GM12878 (cell line): ENCODE measurements at regions of chr1 and their contacts with region 1.

Region 1: GRCh38 chr1:233598891-233599541 is 14.9 kb upstream of the KCNK1 start:
- DNase-seq: peak; percentile 76
- ATAC-seq: peak; percentile 82
- H3K4me3 ChIP-seq: peak overlapping the region; percentile 33; the same call in 1 of the 2 replicates
- H3K27ac ChIP-seq: peak overlapping the region; percentile 96
- H3K4me1 ChIP-seq: peaks cover 30% of the 10 kb centered on the region
- H3K27me3 ChIP-seq: no peaks in the 10 kb centered on the region
- CTCF ChIP-seq: no peak
- EP300 ChIP-seq: peak; percentile 94 to 98
- POLR2A ChIP-seq: no peak
- RAD21 ChIP-seq: no peak

Region 2: DNA sequence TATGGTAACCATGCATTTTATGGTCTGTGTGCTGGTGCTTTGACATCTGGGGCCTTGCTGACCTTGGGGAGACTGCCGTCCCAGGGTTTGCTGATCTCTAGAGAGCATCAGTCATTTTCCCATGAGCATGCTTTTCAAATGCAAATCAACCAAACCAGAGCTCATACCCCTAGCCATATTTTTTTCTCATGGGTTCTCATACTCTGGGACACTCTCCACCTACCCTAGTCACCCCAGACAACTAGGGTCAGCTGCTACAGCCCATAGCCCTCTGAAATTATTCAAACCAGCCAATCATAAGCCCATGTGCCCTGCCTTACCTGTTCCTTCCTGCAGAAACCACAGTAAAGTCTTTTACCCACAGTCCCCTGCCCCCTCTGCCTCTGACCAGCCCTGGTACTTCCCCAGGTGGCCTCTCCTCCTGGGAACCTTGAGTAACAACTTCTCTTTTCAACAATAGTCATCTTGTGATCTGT is 139.5 kb before region 1 on chr1:
- CTCF ChIA-PET with region 1: interaction called, 6 read pairs
- POLR2A ChIA-PET with region 1: no interaction called
- RAD21 ChIA-PET with region 1: interaction called, 19 read pairs
- SMC1A ChIA-PET with region 1: interaction called, 18 read pairs
- in situ Hi-C with region 1: no loop called
- intact Hi-C with region 1: loop called (anchors 1 kb)
- DNase-seq: peak; percentile 83
- ATAC-seq: peak; percentile 90
- H3K4me3 ChIP-seq: no peak overlapping the region
- H3K27ac ChIP-seq: no peak overlapping the region
- H3K4me1 ChIP-seq: peaks cover 8% of the 10 kb centered on the region
- H3K27me3 ChIP-seq: no peaks in the 10 kb centered on the region
- CTCF ChIP-seq: no peak
- EP300 ChIP-seq: peak; percentile 59 to 60; a peak in 3 of 4 replicates
- POLR2A ChIP-seq: no peak
- RAD21 ChIP-seq: no peak

Region 3: DNA sequence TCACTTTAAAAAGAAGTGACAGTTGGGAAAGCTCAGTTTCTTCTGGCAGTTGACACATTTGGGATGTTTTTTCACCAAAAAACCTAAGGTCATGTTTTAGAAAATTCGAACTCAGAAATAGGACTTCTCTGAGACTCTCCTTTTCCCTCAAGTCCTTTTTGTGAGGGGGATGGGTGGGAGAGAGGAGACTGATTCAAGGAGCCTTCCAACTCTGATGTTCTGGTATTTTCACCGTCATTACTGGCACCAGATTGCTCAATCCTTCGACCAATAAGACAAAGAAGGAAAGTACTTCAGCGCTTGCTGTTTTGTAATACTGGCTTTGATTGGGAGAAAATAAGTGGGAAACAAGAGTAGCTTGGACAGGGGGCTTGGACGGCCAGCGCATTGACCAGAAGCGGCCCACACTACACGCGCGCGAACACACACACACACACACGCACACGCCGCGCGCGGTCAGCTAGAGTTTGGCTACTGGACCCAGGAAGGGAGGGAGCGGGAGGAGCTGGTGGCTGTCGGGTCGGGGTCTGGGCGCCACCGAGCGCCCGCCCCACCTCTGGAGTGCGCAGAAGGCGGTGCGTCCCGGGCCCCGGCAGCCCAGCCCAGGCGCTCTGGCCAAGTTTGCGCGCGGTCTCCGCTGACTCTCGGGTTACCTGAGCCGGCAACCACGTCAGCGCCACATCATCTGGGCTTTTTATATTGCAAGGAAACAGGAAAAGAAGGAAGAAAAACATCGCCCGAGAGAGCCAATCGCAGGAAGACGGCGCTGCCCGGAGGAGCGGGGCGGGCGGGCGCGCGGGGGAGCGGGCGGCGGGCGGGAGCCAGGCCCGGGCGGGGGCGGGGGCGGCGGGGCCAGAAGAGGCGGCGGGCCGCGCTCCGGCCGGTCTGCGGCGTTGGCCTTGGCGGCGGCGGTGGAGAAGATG is 14.5 kb after region 1 on chr1 and contains the start of gene KCNK1:
- CTCF ChIA-PET with region 1: interaction called, 6 read pairs
- POLR2A ChIA-PET with region 1: interaction called, 27 read pairs
- RAD21 ChIA-PET with region 1: interaction called, 31 read pairs
- SMC1A ChIA-PET with region 1: interaction called, 29 read pairs
- in situ Hi-C with region 1: no loop called
- intact Hi-C with region 1: loop called (anchors 1 kb)
- DNase-seq: no peak
- ATAC-seq: peak; percentile 51
- H3K4me3 ChIP-seq: peak within 1 kb of the TSS; percentile 81
- H3K27ac ChIP-seq: peak within 1 kb of the TSS; percentile 76
- H3K4me1 ChIP-seq: peaks cover 9% of the 10 kb centered on the region
- H3K27me3 ChIP-seq: no peaks in the 10 kb centered on the region
- CTCF ChIP-seq: no peak
- EP300 ChIP-seq: no peak
- POLR2A ChIP-seq: no peak
- RAD21 ChIP-seq: no peak
- polyA plus RNA-seq, gene KCNK1: 9.4 to 14.6 TPM

Region 4: GRCh38 chr1:233620065-233620464 is 21.0 kb after region 1 on chr1:
- CTCF ChIA-PET with region 1: interaction called, 5 read pairs
- POLR2A ChIA-PET with region 1: interaction called, 25 read pairs
- RAD21 ChIA-PET with region 1: interaction called, 28 read pairs
- SMC1A ChIA-PET with region 1: interaction called, 14 read pairs
- in situ Hi-C with region 1: no loop called
- intact Hi-C with region 1: no loop called
- DNase-seq: peak; percentile 49
- ATAC-seq: peak; percentile 59
- H3K4me3 ChIP-seq: no peak overlapping the region
- H3K27ac ChIP-seq: no peak overlapping the region
- H3K4me1 ChIP-seq: peaks cover 23% of the 10 kb centered on the region
- H3K27me3 ChIP-seq: no peaks in the 10 kb centered on the region
- CTCF ChIP-seq: no peak
- EP300 ChIP-seq: peak; percentile 58 to 86; a peak in 3 of 4 replicates
- POLR2A ChIP-seq: no peak
- RAD21 ChIP-seq: no peak

Region 5: DNA sequence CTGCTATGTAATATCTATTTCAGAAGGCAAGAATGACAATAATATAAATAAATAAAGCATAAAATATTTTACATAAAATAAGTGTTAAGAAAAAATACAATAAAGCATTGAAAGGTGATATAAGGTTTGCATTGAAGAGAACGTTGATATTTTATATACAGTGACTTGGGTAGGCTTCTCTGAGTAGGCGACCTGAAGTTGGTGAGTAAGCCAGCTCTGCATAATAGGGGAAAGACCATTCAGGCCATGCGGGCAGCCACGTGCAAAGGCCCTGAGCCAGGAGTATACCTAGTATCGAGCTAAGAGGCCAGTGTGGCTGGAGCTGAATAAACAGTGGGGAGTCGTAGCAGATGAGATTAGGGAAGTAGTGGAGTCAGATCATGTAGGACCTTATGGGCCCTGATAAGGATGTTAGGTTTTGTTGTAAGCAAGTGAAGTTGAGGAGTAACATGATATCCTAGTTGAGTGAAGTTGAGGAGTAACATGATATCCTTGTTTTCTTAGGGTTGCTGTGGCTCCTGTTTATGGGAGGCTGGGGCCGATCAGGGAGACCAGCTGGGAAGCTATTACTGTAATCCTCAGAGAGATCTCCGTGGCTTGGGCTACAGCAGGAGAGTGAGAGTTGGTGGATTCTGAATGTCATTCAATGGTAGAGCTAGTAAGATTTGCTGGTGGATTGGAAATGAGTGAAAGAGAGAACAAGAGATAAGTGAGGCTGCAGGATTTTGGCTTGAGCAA is 36.9 kb after region 1 on chr1:
- CTCF ChIA-PET with region 1: interaction called, 3 read pairs
- POLR2A ChIA-PET with region 1: interaction called, 3 read pairs
- RAD21 ChIA-PET with region 1: interaction called, 12 read pairs
- SMC1A ChIA-PET with region 1: interaction called, 7 read pairs
- in situ Hi-C with region 1: no loop called
- intact Hi-C with region 1: no loop called
- DNase-seq: no peak
- ATAC-seq: no peak
- H3K4me3 ChIP-seq: no peak overlapping the region
- H3K27ac ChIP-seq: no peak overlapping the region
- H3K4me1 ChIP-seq: peaks cover 18% of the 10 kb centered on the region
- H3K27me3 ChIP-seq: no peaks in the 10 kb centered on the region
- CTCF ChIP-seq: no peak
- EP300 ChIP-seq: no peak
- POLR2A ChIP-seq: no peak
- RAD21 ChIP-seq: no peak